Activated T-helper 2 cell treated with anti-CD3 and anti-CD28 coated beads, Interferon-gamma antibody, Interleukin-2, Interleukin-4, amounts not matched to agents 10 μg/mL and 5 μg/mL and 100 μg/mL, durations not matched to agents 14 hours and 24 hours and 36 hours (primary cell): ENCODE measurements at regions of chr4 and their contacts with region 1.

Region 1: DNA sequence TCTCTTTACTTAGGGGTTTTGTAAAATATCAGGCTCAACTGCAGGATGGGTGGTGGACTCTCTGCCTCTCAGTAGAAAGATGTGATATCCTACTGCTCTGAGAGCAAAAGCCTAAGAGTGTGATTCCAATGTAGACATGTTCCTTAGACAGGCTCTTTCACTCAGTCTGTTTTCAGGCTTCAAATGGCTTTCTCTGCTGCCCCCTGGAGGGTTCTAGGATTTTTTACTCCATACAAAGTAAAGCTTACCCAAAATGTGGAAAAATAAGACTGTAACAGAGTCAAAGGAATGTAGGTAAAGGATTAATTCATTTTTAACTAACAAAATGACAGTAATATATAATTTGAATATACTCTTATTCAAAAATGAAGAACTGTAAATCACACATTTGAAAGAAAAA is 32.1 kb downstream of the ZGRF1 start:
- DNase-seq: no peak
- H3K4me3 Mint-ChIP-seq: no peak overlapping the region
- H3K27ac Mint-ChIP-seq: no peak overlapping the region
- H3K4me1 Mint-ChIP-seq: no peaks in the 10 kb centered on the region
- H3K27me3 Mint-ChIP-seq: no peaks in the 10 kb centered on the region

Region 2: DNA sequence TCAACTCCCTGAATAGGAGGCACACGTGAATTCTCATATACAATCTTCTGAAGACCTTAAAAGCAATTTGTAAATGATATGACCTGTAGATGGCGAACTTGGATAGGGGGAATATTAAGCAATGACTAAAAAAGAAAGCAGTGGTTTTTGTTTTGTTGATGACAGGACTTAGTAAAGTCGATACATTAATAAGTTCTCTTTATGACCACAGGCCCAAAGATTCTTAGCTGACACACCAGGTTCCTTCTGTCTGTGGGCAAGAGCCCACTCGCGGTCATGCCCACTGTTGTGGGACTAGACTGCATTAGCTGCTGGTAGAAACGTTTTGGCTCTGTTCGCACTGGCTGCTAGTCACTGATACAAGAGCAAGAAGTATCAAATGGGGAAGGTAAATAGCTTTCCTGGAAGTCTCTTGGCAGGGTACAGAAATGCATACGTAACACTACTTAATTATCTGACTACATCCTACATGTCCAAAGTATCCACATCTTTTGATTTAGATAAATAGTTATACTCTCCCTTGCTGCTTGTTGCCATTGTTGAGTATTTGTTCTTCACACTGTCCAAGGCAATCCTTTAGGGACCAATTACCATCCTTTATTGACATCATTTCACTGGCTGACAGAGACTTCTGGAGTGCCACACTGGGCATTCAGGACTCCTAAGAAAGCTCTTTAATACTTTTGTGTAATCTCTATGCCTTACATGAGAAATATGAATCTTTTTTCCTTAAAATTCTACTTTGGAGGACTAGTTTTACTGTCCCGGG is 276.4 kb before region 1 on chr4:
- intact Hi-C with region 1: loop called (anchors 2 kb)
- DNase-seq: no peak
- H3K4me3 Mint-ChIP-seq: no peak overlapping the region
- H3K27ac Mint-ChIP-seq: no peak overlapping the region
- H3K4me1 Mint-ChIP-seq: peaks cover 4% of the 10 kb centered on the region
- H3K27me3 Mint-ChIP-seq: no peaks in the 10 kb centered on the region

Region 3: DNA sequence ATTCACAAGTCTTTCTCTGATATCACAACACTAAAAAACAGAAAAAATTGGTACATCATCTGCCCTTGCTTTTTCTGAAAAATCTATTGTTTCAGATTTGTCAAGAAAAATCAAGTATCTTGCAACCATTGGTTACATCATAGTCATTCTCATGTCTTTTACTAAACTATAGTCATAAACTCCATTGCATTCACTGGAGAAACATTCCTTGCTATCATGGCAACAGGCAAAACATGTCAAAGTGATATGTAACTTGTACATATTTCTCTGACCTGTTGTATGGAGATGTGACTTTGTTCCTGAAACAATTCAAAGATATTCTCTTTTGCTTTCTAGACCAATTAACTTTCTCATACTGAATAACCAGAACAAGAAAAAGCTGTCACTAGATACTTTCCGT is 323.0 kb after region 1 on chr4:
- intact Hi-C with region 1: no loop called
- DNase-seq: no peak
- H3K4me3 Mint-ChIP-seq: no peak overlapping the region
- H3K27ac Mint-ChIP-seq: no peak overlapping the region
- H3K4me1 Mint-ChIP-seq: no peaks in the 10 kb centered on the region
- H3K27me3 Mint-ChIP-seq: peaks cover 2% of the 10 kb centered on the region